ENCODE measurements at regions of chr12 and their contacts with region 1.

Region 1: GRCh38 chr12:40587421-40587820 is 104.8 kb upstream of the CNTN1 start:
- DNase-seq: peak; percentile 25
- H3K4me3 ChIP-seq: no peak overlapping the region
- H3K27ac ChIP-seq: no peak overlapping the region
- H3K4me1 ChIP-seq: no peaks in the 10 kb centered on the region
- H3K27me3 ChIP-seq: no peaks in the 10 kb centered on the region
- CTCF ChIP-seq: no peak

Region 2: GRCh38 chr12:40152783-40153383 is 434.5 kb before region 1 on chr12:
- CTCF ChIA-PET with region 1: no interaction called
- dilution Hi-C with region 1: no loop called
- in situ Hi-C with region 1: no loop called
- intact Hi-C with region 1: loop called (anchors 5 kb)
- DNase-seq: peak; percentile 41
- H3K4me3 ChIP-seq: no peak overlapping the region
- H3K27ac ChIP-seq: no peak overlapping the region
- H3K4me1 ChIP-seq: peaks cover 13% of the 10 kb centered on the region
- H3K27me3 ChIP-seq: no peaks in the 10 kb centered on the region
- CTCF ChIP-seq: peak; percentile 80 to 87

Region 3: GRCh38 chr12:40336573-40337199 is 250.7 kb before region 1 on chr12:
- CTCF ChIA-PET with region 1: no interaction called
- dilution Hi-C with region 1: no loop called
- in situ Hi-C with region 1: loop called (anchors 25 kb)
- intact Hi-C with region 1: loop called (anchors 5 kb)
- DNase-seq: no peak
- H3K4me3 ChIP-seq: no peak overlapping the region
- H3K27ac ChIP-seq: no peak overlapping the region
- H3K4me1 ChIP-seq: peaks cover 16% of the 10 kb centered on the region
- H3K27me3 ChIP-seq: no peaks in the 10 kb centered on the region
- CTCF ChIP-seq: peak; percentile 52 to 63

Region 4: GRCh38 chr12:40393031-40393430 is 194.4 kb before region 1 on chr12:
- CTCF ChIA-PET with region 1: no interaction called
- dilution Hi-C with region 1: loop called (anchors 10 kb)
- in situ Hi-C with region 1: no loop called
- intact Hi-C with region 1: no loop called
- DNase-seq: no peak
- H3K4me3 ChIP-seq: no peak overlapping the region
- H3K27ac ChIP-seq: no peak overlapping the region
- H3K4me1 ChIP-seq: no peaks in the 10 kb centered on the region
- H3K27me3 ChIP-seq: no peaks in the 10 kb centered on the region
- CTCF ChIP-seq: no peak

Region 5: DNA sequence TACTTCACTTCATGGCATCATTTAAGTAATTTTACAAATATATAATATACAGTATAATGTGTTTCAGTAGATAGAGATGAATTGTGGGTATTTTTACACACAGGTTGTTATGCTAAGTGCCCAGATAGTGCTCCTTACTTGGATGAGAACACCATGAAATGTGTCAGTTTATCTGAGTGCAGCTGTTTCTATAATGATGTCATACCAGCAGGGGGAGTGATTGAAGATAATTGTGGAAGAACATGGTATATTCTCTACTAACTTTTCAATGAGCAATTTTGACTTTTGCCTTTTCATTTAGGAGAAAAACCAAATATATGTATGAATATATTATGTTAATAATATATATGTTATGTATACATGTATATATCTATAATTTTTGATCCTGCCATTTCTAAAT is 141.0 kb before region 1 on chr12:
- CTCF ChIA-PET with region 1: no interaction called
- dilution Hi-C with region 1: no loop called
- in situ Hi-C with region 1: no loop called
- intact Hi-C with region 1: loop called (anchors 5 kb)
- DNase-seq: peak; percentile 17
- H3K4me3 ChIP-seq: no peak overlapping the region
- H3K27ac ChIP-seq: no peak overlapping the region
- H3K4me1 ChIP-seq: no peaks in the 10 kb centered on the region
- H3K27me3 ChIP-seq: no peaks in the 10 kb centered on the region
- CTCF ChIP-seq: peak; percentile 40 to 61

Region 6: DNA sequence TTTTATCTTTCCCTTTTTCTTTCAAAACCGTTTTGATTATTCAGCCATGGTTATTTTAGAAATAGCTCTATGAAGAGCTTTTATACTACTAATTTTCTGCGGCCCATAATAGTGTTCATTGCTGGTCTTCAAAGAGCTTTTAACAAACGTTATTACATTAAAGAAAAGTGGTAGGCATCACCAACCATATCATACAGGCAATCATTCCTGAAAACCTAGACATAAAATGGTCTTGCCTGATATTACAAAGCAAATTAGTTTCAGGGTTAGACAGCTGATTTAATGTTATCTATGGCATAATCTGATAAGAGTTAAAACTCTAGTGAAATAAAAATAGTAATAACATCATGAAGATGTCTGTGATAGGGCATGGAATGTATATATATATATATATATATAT is 15.1 kb after region 1 on chr12:
- CTCF ChIA-PET with region 1: no interaction called
- dilution Hi-C with region 1: no loop called
- in situ Hi-C with region 1: no loop called
- intact Hi-C with region 1: no loop called
- DNase-seq: no peak
- H3K4me3 ChIP-seq: no peak overlapping the region
- H3K27ac ChIP-seq: no peak overlapping the region
- H3K4me1 ChIP-seq: no peaks in the 10 kb centered on the region
- H3K27me3 ChIP-seq: no peaks in the 10 kb centered on the region
- CTCF ChIP-seq: no peak

Region 7: DNA sequence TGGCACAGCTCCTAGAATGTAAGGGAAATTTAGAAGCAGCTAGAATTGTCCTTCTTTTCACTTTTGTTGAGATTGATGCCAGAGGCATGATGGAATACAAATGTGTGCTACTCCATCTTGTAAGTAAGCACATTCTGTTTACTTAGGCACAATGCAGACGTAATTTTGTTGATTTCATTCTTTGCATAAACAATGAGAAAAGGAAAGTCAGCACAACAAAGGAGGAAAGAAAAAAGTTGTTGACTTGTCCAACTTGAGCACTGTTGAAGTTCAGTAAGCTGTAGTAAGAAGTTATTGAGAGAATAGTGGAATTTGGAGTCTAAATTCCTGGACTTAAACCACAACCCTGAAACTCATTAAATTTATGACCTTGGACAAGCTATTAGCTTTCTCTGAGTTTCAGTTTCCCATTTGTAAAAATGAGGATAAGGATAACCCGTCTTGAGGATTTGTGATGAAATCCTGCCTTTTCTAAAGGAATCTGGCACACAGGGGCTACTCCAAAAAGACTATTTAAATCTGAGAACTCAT is 85.4 kb after region 1 on chr12:
- CTCF ChIA-PET with region 1: no interaction called
- dilution Hi-C with region 1: no loop called
- in situ Hi-C with region 1: no loop called
- intact Hi-C with region 1: no loop called
- DNase-seq: no peak
- H3K4me3 ChIP-seq: no peak overlapping the region
- H3K27ac ChIP-seq: no peak overlapping the region
- H3K4me1 ChIP-seq: no peaks in the 10 kb centered on the region
- H3K27me3 ChIP-seq: no peaks in the 10 kb centered on the region
- CTCF ChIP-seq: no peak

Region 8: GRCh38 chr12:40988824-40989223 is 401.4 kb after region 1 on chr12:
- CTCF ChIA-PET with region 1: no interaction called
- dilution Hi-C with region 1: no loop called
- in situ Hi-C with region 1: no loop called
- intact Hi-C with region 1: no loop called
- DNase-seq: no peak
- H3K4me3 ChIP-seq: no peak overlapping the region
- H3K27ac ChIP-seq: no peak overlapping the region
- H3K4me1 ChIP-seq: no peaks in the 10 kb centered on the region
- H3K27me3 ChIP-seq: no peaks in the 10 kb centered on the region
- CTCF ChIP-seq: no peak

Measured in mammary epithelial cell (primary cell).